ENCODE measurements at regions of chr5 and their contacts with region 1.

Region 1: DNA sequence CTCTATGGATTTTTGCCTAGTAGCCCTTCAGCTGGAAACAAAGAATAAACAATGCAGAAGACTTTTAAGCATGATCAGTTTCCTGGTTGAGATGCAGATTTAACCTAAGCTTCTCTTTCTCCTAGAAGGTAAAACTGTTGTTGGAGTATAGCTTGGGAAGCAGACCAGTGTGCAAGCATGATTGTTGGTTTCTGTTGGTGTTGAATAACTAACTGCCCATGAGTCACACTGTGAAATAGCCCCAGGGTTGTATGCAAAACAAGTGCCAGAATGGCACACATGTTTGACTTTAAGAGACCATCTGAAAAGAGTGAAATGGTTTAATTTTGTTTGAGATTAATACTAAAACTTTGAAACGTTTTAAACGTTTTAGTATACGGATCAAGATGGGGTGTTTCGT is 227.1 kb downstream of the ARHGEF28 start:
- DNase-seq: peak; percentile 84
- H3K4me3 Mint-ChIP-seq: no peak overlapping the region
- H3K27ac Mint-ChIP-seq: peak overlapping the region; percentile 49
- H3K4me1 Mint-ChIP-seq: no peaks in the 10 kb centered on the region
- H3K27me3 Mint-ChIP-seq: no peaks in the 10 kb centered on the region
- CTCF ChIP-seq: no peak

Region 2: GRCh38 chr5:73826301-73827105 is 26.6 kb before region 1 on chr5:
- CTCF ChIA-PET with region 1: no interaction called
- POLR2A ChIA-PET with region 1: interaction called, 6 read pairs
- intact Hi-C with region 1: loop called (anchors 2 kb)
- DNase-seq: peak; percentile 98
- H3K4me3 Mint-ChIP-seq: no peak overlapping the region
- H3K27ac Mint-ChIP-seq: no peak overlapping the region
- H3K4me1 Mint-ChIP-seq: peaks cover 7% of the 10 kb centered on the region
- H3K27me3 Mint-ChIP-seq: no peaks in the 10 kb centered on the region
- CTCF ChIP-seq: no peak